ENCODE measurements at regions of chr12 and their contacts with region 1.

Region 1: DNA sequence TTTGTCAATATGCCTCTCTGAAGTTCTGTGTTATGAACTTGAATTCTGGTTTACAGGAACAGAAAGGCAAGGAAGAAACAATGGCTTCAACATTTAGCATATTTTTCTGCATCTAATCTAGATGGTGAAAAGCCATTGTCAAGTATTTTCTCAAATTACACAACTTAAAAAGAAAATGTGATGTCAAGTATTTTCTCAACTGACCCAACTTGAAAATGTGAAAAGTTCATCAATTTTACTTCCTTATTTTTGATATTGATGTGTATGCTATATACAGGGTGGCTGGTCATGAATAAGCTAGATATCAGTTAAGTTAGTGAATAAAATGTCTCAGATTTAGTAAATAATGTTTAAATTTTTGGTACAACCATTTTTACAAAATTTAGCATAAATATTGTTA is 196.7 kb downstream of the ALX1 start:
- DNase-seq: no peak

Region 2: DNA sequence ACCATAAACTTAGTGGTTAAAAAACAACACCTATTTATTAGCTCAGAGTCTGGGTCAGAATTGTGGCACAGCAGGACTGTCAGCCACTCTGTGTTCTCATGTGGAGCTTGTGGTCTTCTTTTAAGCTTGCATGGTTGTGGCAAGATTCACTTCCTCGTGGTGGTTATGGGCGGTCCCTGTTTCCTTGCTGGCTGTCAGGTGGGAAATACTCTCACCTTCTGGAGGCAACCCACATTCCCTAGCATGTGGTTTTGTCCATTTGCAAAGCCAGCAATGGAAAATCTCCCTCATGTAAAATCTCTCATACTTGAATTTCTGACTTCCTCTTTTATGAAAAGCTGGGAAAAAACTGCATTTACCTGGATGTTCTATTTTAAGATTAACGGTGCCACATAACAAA is 33.1 kb after region 1 on chr12:
- intact Hi-C with region 1: no loop called
- DNase-seq: no peak

Region 3: DNA sequence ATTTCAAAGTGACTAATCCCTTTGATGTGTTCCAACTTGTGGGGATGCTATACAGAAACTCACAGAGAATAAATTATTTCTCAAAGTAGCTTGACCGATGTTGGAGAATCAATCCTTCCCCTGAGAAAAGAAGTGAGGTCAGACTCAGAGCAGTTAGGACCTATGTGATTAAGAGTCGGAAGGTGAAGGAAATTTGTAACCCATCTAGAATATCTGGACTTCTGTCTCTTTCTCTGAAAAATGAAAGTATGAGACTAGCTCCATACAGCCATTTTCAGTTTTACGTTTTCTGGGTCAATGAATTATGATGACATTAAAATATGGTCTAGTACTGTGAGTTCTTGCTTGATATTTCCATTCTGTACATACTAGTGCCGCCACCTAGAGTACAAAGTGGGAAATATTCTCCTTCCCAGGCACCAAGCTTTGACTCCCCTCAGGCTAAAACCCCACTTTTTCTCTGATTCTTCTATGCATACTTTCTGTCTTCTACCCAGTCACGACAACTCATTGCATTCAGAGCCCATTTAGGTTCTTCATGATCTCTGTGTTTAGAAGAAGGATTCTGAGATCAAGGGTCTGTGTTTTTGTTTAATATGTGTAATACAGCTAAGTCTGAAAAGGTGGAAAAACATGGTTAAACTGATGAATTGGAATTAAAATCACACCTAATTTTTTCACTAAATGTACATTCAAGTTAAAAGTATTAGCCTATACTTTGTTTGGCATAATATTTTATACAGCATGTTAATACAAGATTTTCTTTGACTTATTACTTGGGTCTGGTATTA is 390.4 kb after region 1 on chr12:
- intact Hi-C with region 1: loop called (anchors 10 kb)
- DNase-seq: peak in 15 of 42 donors; percentile 8 to 66 (median 38)